HepG2 (cell line): ENCODE measurements at regions of chr4 and their contacts with region 1.

Region 1: GRCh38 chr4:182897601-182898478 is 19.3 kb downstream of the DCTD start:
- DNase-seq: peak; percentile 94
- ATAC-seq: peak; percentile 95
- H3K4me3 ChIP-seq: peak overlapping the region in 2 of 3 experiments; percentile 15 to 35; a peak in 3 of 6 replicates
- H3K27ac ChIP-seq: peak overlapping the region; percentile 93
- H3K4me1 ChIP-seq: peaks cover 67% of the 10 kb centered on the region
- H3K27me3 ChIP-seq: no peaks in the 10 kb centered on the region
- CTCF ChIP-seq: peak; percentile 38
- EP300 ChIP-seq: peak; percentile 38 to 76; a peak in 2 of 4 replicates
- POLR2A ChIP-seq: peak; percentile 64 to 79
- RAD21 ChIP-seq: peak; percentile 19; the same call in 1 of the 2 replicates

Region 2: GRCh38 chr4:182880387-182881356 is 17.2 kb before region 1 on chr4:
- CTCF ChIA-PET with region 1: no interaction called
- POLR2A ChIA-PET with region 1: interaction called, 69 read pairs
- in situ Hi-C with region 1: no loop called
- intact Hi-C with region 1: loop called (anchors 1 kb)
- DNase-seq: peak; percentile 89
- ATAC-seq: peak; percentile 90
- H3K4me3 ChIP-seq: peak overlapping the region; percentile 20 to 58 (median 24); a peak in 5 of 6 replicates
- H3K27ac ChIP-seq: peak overlapping the region; percentile 84
- H3K4me1 ChIP-seq: peaks cover 59% of the 10 kb centered on the region
- H3K27me3 ChIP-seq: no peaks in the 10 kb centered on the region
- CTCF ChIP-seq: no peak; the same call in 1 of the 2 replicates
- EP300 ChIP-seq: peak in 1 of 2 experiments; percentile 69; a peak in 2 of 4 replicates
- POLR2A ChIP-seq: peak; percentile 77 to 78
- RAD21 ChIP-seq: peak; percentile 57; the same call in 1 of the 2 replicates

Region 3: GRCh38 chr4:182917182-182918043 is 19.6 kb after region 1 on chr4 and contains the start of gene DCTD:
- CTCF ChIA-PET with region 1: no interaction called
- POLR2A ChIA-PET with region 1: interaction called, 34 read pairs
- in situ Hi-C with region 1: no loop called
- intact Hi-C with region 1: loop called (anchors 1 kb)
- DNase-seq: peak; percentile 65
- ATAC-seq: peak; percentile 84
- H3K4me3 ChIP-seq: peak within 1 kb of the TSS; percentile 76 to 87 (median 77)
- H3K27ac ChIP-seq: peak within 1 kb of the TSS; percentile 94
- H3K4me1 ChIP-seq: peaks cover 74% of the 10 kb centered on the region
- H3K27me3 ChIP-seq: no peaks in the 10 kb centered on the region
- CTCF ChIP-seq: peak; percentile 79
- EP300 ChIP-seq: no peak; a peak in 1 of 4 replicates
- POLR2A ChIP-seq: peak; percentile 59 to 72
- RAD21 ChIP-seq: peak; percentile 34; the same call in 1 of the 2 replicates
- total RNA-seq, gene DCTD: 67.2 and 85.1 TPM in 2 replicates